PC-9 (cell line): ENCODE measurements at regions of chr6 and their contacts with region 1.

Region 1: DNA sequence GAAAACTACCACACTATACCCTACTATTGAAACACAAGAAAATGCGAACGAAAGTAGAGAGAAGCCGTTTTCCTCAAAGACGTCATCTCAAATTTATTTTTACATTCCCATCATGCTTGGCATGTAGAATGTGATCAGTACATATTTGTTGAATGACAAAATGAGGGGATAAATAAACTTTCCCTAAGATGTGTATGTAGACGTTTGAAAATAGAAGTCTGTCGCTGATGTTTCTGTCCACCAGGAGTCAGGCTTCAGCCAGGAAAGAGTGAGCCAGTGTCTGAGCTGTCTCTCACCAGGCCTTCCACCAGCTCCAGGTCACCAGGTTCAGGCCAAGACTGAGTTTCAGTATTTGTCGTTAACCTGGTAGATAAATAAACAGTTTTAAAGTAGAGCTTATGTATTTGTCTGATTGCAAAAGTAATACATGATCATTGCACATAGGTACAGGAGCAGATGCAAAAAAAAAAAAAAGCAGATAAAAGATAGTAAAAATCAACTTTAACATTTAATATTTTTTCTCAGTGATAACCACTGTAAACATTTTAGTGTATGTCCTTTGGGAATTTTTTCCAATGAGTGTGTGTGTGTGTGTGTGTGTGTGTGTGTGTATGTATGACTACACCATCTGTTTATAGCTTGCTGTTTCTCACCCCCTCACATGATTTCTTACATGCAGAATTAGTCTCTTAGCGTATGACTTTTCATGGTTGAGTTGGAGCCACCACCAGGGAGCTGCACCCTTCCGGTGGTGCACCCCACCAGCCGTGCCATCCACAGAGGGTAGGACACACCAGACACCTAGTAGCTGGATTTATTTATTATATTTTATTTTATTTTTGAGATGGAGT is 26.2 kb downstream of the WRNIP1 start:
- DNase-seq: peak; percentile 71
- H3K4me3 ChIP-seq: no peak overlapping the region
- H3K27ac ChIP-seq: peak overlapping the region; percentile 74
- H3K4me1 ChIP-seq: peaks cover 4% of the 10 kb centered on the region; the same call in 1 of the 2 replicates
- H3K27me3 ChIP-seq: no peaks in the 10 kb centered on the region
- CTCF ChIP-seq: peak; percentile 80

Region 2: DNA sequence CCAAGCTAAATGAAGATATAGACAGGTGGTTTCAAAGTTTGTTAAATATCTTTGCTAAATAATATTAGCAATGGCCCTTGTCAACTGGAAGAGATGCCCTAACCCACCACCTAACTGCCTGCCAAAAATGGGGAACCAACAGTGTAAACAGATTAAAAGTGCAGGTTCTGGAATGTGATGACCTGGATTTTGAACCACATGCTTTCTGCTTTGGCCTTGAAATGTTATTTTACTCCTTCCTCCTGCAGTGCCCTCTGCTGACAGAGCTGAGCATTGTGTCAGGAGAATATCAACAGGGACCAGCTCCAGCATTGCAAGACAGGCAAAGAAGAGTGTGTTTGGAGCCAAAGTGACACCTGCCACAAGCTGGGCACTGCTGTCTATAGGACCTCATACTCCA is 267.3 kb before region 1 on chr6:
- CTCF ChIA-PET with region 1: no interaction called
- POLR2A ChIA-PET with region 1: no interaction called
- intact Hi-C with region 1: no loop called
- DNase-seq: no peak
- H3K4me3 ChIP-seq: no peak overlapping the region
- H3K27ac ChIP-seq: no peak overlapping the region
- H3K4me1 ChIP-seq: 0 out of 2 replicates have a peak, but pooled peaks cover 7% of the 10 kb centered on the region
- H3K27me3 ChIP-seq: no peaks in the 10 kb centered on the region
- CTCF ChIP-seq: peak; percentile 44; the same call in 1 of the 2 replicates

Region 3: GRCh38 chr6:2772840-2773239 is 18.5 kb before region 1 on chr6:
- CTCF ChIA-PET with region 1: interaction called, 11 read pairs
- POLR2A ChIA-PET with region 1: interaction called, 11 read pairs
- intact Hi-C with region 1: no loop called
- DNase-seq: no peak
- H3K4me3 ChIP-seq: no peak overlapping the region
- H3K27ac ChIP-seq: no peak overlapping the region
- H3K4me1 ChIP-seq: peaks cover 12% of the 10 kb centered on the region
- H3K27me3 ChIP-seq: no peaks in the 10 kb centered on the region
- CTCF ChIP-seq: no peak

Region 4: GRCh38 chr6:2818593-2818992 is 27.2 kb after region 1 on chr6:
- CTCF ChIA-PET with region 1: no interaction called
- POLR2A ChIA-PET with region 1: interaction called, 16 read pairs
- intact Hi-C with region 1: no loop called
- DNase-seq: peak in 1 of 2 experiments; percentile 67
- H3K4me3 ChIP-seq: peak overlapping the region; percentile 34; the same call in 1 of the 2 replicates
- H3K27ac ChIP-seq: peak overlapping the region; percentile 98
- H3K4me1 ChIP-seq: peaks cover 40% of the 10 kb centered on the region
- H3K27me3 ChIP-seq: no peaks in the 10 kb centered on the region
- CTCF ChIP-seq: no peak

Region 5: GRCh38 chr6:2911171-2911570 is 119.8 kb after region 1 on chr6:
- CTCF ChIA-PET with region 1: interaction called, 5 read pairs
- POLR2A ChIA-PET with region 1: no interaction called
- intact Hi-C with region 1: loop called (anchors 1 kb)
- DNase-seq: no peak
- H3K4me3 ChIP-seq: no peak overlapping the region
- H3K27ac ChIP-seq: no peak overlapping the region
- H3K4me1 ChIP-seq: no peaks in the 10 kb centered on the region
- H3K27me3 ChIP-seq: no peaks in the 10 kb centered on the region
- CTCF ChIP-seq: no peak

Region 6: GRCh38 chr6:2931970-2932748 is 140.8 kb after region 1 on chr6:
- CTCF ChIA-PET with region 1: interaction called, 6 read pairs
- POLR2A ChIA-PET with region 1: no interaction called
- intact Hi-C with region 1: loop called (anchors 1 kb)
- DNase-seq: peak; percentile 70 to 84
- H3K4me3 ChIP-seq: no peak overlapping the region
- H3K27ac ChIP-seq: peak overlapping the region; percentile 46
- H3K4me1 ChIP-seq: peaks cover 3% of the 10 kb centered on the region; the same call in 1 of the 2 replicates
- H3K27me3 ChIP-seq: no peaks in the 10 kb centered on the region
- CTCF ChIP-seq: peak; percentile 83

Region 7: DNA sequence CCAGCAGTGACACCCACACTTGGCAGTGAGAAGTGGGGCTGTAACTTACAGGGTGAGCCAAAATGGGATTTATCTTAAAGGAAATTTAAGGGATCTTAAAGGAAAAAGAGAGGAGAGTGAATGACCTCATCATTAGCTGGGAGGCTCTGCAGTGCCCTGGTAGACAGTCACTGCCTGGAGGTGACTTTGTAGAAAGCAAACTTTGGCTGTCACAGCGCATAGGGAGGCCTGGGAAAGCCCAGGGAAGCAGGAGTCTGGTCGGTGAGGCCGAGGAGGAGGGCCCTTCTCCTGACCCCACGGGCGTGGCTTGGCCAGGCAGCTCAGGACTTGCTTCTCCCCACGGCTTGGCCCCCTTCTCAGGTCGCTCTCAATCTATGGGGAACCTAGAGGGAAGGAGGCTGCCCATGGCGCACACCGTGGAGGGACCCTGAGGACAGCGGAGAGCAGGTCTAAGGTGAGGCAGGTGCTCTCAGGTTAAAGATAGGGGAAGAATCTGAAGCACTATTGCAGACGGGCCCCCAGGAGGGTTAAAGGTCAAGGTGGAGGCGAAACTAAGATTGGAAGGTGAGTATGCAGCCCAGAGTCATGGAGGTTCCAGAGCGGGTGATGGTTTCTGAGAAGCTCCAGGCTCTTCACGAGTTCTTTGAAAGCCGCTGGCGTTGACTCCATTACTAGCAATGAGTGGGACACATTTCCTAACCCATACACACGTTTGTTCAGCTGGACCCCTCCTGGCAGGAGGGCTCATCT is 261.3 kb after region 1 on chr6:
- CTCF ChIA-PET with region 1: no interaction called
- POLR2A ChIA-PET with region 1: no interaction called
- intact Hi-C with region 1: loop called (anchors 10 kb)
- DNase-seq: no peak
- H3K4me3 ChIP-seq: no peak overlapping the region
- H3K27ac ChIP-seq: no peak overlapping the region
- H3K4me1 ChIP-seq: no peaks in the 10 kb centered on the region
- H3K27me3 ChIP-seq: no peaks in the 10 kb centered on the region
- CTCF ChIP-seq: no peak